H1 (cell line): ENCODE measurements at regions of chr17 and their contacts with region 1.

Region 1: DNA sequence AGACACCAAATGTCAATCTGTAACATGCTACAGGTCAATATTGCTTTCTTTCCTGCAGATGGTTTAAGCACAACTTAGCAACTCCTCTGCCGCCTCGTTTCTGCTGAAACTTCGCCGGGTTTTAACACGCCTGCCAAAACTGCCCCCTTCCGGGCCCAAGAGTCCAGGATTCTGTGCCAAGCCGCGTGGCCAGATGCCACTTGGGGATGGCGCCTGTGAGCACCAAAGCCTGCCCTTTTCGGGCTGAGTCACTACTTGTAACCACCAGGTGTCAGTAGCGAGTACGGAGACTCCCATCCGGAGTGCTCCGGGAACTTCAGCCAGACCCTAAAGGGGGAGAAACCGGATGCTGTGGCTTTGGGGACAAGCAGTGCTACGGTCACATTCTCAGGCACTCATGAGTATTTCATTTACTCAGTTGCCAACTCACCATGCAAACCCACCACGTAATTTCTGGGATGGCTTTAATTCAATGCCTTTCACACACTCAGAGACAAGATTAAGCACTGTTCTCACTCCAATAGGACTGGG is 7.8 kb downstream of the PMP22 start:
- DNase-seq: peak in 1 of 2 experiments; percentile 85
- H3K4me3 ChIP-seq: peak overlapping the region in 2 of 4 experiments; percentile 14 to 21; a peak in 3 of 8 replicates
- H3K27ac ChIP-seq: no peak overlapping the region
- H3K4me1 ChIP-seq: peaks cover 0 to 10% (median 4%) of the 10 kb centered on the region in 4 experiments; a peak in 5 of 7 replicates
- H3K27me3 ChIP-seq: peaks cover 28 to 53% (median 46%) of the 10 kb centered on the region in 4 experiments
- CTCF ChIP-seq: peak; percentile 79 to 94 (median 92)
- EP300 ChIP-seq: no peak
- POLR2A ChIP-seq: no peak
- RAD21 ChIP-seq: peak; percentile 57 to 79

Region 2: DNA sequence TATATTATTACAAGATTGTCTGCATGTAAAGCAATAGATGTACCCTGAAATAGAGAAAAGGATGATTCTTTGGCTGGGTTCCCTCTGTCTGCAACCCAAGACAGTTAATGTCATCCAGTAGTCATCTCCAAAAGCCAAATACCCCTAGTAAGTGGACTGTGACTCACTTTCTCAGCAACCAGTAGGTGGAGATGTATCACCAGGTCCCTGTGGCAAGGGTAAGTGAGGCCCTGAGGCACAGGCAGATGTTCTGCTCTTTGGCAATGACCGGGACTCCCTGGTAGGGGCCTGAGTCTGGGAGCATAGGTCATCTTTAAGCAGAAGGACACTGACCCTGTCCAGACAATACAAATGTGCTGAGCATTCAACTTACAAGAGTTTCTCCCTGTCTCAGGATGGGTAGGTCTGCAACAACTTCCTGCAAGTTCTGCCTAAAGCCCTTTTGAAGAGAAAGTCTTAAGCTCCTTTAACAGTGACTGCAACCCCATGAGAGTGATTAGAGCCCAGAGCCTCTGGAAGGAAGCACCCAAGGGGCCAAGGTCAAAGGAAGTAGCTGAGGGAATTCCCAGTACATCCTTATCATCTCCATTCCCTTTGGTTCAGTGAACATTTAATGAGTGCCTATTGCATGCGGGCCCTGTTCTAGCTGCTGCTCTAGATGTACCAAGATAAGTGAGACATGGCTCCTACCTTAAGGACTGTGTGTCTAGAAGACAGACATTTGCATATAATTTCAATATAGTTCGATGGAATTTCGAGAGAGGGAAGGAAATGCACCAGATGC is 24.1 kb before region 1 on chr17:
- CTCF ChIA-PET with region 1: interaction called, 18 read pairs
- POLR2A ChIA-PET with region 1: no interaction called
- DNase-seq: no peak
- H3K4me3 ChIP-seq: no peak overlapping the region
- H3K27ac ChIP-seq: no peak overlapping the region
- H3K4me1 ChIP-seq: peaks cover 0 to 3% (median 0%) of the 10 kb centered on the region in 4 experiments; a peak in 1 of 7 replicates
- H3K27me3 ChIP-seq: no peaks in the 10 kb centered on the region; a peak in 1 of 7 replicates
- CTCF ChIP-seq: peak; percentile 53 to 66 (median 53)
- EP300 ChIP-seq: no peak
- POLR2A ChIP-seq: no peak
- RAD21 ChIP-seq: peak; percentile 71 to 82

Region 3: GRCh38 chr17:15436473-15437302 is 179.4 kb after region 1 on chr17:
- CTCF ChIA-PET with region 1: interaction called, 27 read pairs
- POLR2A ChIA-PET with region 1: no interaction called
- DNase-seq: peak in 1 of 2 experiments; percentile 56
- H3K4me3 ChIP-seq: no peak overlapping the region
- H3K27ac ChIP-seq: no peak overlapping the region
- H3K4me1 ChIP-seq: no peaks in the 10 kb centered on the region
- H3K27me3 ChIP-seq: no peaks in the 10 kb centered on the region
- CTCF ChIP-seq: peak; percentile 40 to 66 (median 47)
- EP300 ChIP-seq: no peak
- POLR2A ChIP-seq: no peak
- RAD21 ChIP-seq: peak; percentile 27 to 45; a peak in 2 of 4 replicates

Region 4: DNA sequence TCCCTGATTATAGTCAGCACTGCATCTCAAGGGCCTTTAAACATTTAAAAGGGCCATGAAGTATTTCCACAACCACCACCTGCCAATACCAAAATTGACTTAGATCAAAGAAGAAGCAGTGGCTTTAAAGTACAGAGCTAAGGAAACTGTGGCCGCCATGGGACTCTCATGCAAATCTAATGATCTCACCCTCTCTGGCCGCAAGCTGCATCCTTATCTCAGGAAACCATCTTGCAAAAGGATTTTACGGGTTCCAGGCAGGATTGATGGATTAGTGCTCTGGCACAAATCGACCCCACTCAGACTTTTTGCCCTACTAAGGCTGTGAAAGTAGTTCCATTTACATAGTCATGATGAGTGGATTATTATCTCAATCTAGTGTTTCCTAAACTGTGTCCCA is 187.5 kb after region 1 on chr17:
- CTCF ChIA-PET with region 1: interaction called, 35 read pairs
- POLR2A ChIA-PET with region 1: no interaction called
- DNase-seq: no peak
- H3K4me3 ChIP-seq: no peak overlapping the region
- H3K27ac ChIP-seq: no peak overlapping the region
- H3K4me1 ChIP-seq: no peaks in the 10 kb centered on the region
- H3K27me3 ChIP-seq: no peaks in the 10 kb centered on the region
- CTCF ChIP-seq: no peak
- EP300 ChIP-seq: no peak
- POLR2A ChIP-seq: no peak
- RAD21 ChIP-seq: no peak

Region 5: GRCh38 chr17:15462976-15463772 is 205.9 kb after region 1 on chr17:
- CTCF ChIA-PET with region 1: interaction called, 10 read pairs
- POLR2A ChIA-PET with region 1: no interaction called
- DNase-seq: no peak
- H3K4me3 ChIP-seq: no peak overlapping the region
- H3K27ac ChIP-seq: no peak overlapping the region
- H3K4me1 ChIP-seq: peaks cover 0 to 3% (median 0%) of the 10 kb centered on the region in 4 experiments; a peak in 1 of 7 replicates
- H3K27me3 ChIP-seq: 0 out of 7 replicates have a peak, but pooled peaks cover 0 to 3% (median 0%) of the 10 kb centered on the region in 4 experiments
- CTCF ChIP-seq: no peak
- EP300 ChIP-seq: no peak
- POLR2A ChIP-seq: no peak
- RAD21 ChIP-seq: no peak

Region 6: GRCh38 chr17:15492781-15493692 is 235.7 kb after region 1 on chr17:
- CTCF ChIA-PET with region 1: interaction called, 87 read pairs
- POLR2A ChIA-PET with region 1: interaction called, 3 read pairs
- DNase-seq: peak in 1 of 2 experiments; percentile 50
- H3K4me3 ChIP-seq: no peak overlapping the region
- H3K27ac ChIP-seq: peak overlapping the region; percentile 7; the same call in 1 of the 2 replicates
- H3K4me1 ChIP-seq: peaks cover 4 to 13% (median 6%) of the 10 kb centered on the region in 4 experiments
- H3K27me3 ChIP-seq: no peaks in the 10 kb centered on the region
- CTCF ChIP-seq: no peak
- EP300 ChIP-seq: no peak
- POLR2A ChIP-seq: no peak
- RAD21 ChIP-seq: no peak